PC-9 (cell line): ENCODE measurements at regions of chr9 and their contacts with region 1.

Region 1: GRCh38 chr9:68584189-68585033 is 43.7 kb upstream of the TMEM252 start:
- DNase-seq: peak; percentile 63 to 71
- H3K4me3 ChIP-seq: no peak overlapping the region
- H3K27ac ChIP-seq: no peak overlapping the region
- H3K4me1 ChIP-seq: no peaks in the 10 kb centered on the region
- H3K27me3 ChIP-seq: peaks cover 3% of the 10 kb centered on the region; the same call in 1 of the 2 replicates
- CTCF ChIP-seq: peak; percentile 98

Region 2: DNA sequence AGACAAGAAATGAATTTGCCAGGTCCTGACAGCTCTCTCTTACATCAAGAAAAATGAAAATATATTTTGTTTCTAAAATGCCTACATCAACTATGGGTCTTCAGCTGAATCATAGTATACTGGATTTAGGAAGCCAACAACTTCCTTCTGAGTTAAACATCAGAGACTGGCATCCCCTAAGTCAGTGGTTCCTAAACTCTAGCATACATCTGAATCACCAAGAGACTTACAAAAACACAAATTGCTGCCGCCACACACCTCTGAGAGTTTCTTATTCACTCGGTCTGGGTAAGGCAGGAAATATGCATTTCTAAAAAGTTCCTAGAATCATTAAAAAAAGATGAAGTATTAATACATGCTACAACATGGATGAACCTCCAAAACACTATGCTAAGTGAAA is 16.7 kb after region 1 on chr9:
- CTCF ChIA-PET with region 1: no interaction called
- POLR2A ChIA-PET with region 1: no interaction called
- intact Hi-C with region 1: no loop called
- DNase-seq: no peak
- H3K4me3 ChIP-seq: no peak overlapping the region
- H3K27ac ChIP-seq: no peak overlapping the region
- H3K4me1 ChIP-seq: no peaks in the 10 kb centered on the region
- H3K27me3 ChIP-seq: peaks cover 26% of the 10 kb centered on the region; the same call in 1 of the 2 replicates
- CTCF ChIP-seq: no peak

Region 3: GRCh38 chr9:68844631-68845612 is 260.5 kb after region 1 on chr9:
- CTCF ChIA-PET with region 1: no interaction called
- POLR2A ChIA-PET with region 1: no interaction called
- intact Hi-C with region 1: loop called (anchors 10 kb)
- DNase-seq: peak in 1 of 2 experiments; percentile 6
- H3K4me3 ChIP-seq: no peak overlapping the region
- H3K27ac ChIP-seq: no peak overlapping the region
- H3K4me1 ChIP-seq: no peaks in the 10 kb centered on the region
- H3K27me3 ChIP-seq: peaks cover 36% of the 10 kb centered on the region
- CTCF ChIP-seq: peak; percentile 54; the same call in 1 of the 2 replicates

Region 4: GRCh38 chr9:68999393-69000105 is 415.1 kb after region 1 on chr9:
- CTCF ChIA-PET with region 1: no interaction called
- POLR2A ChIA-PET with region 1: no interaction called
- intact Hi-C with region 1: loop called (anchors 1 kb)
- DNase-seq: peak in 1 of 2 experiments; percentile 41
- H3K4me3 ChIP-seq: no peak overlapping the region
- H3K27ac ChIP-seq: no peak overlapping the region
- H3K4me1 ChIP-seq: no peaks in the 10 kb centered on the region
- H3K27me3 ChIP-seq: peaks cover 94% of the 10 kb centered on the region
- CTCF ChIP-seq: peak; percentile 69

Region 5: DNA sequence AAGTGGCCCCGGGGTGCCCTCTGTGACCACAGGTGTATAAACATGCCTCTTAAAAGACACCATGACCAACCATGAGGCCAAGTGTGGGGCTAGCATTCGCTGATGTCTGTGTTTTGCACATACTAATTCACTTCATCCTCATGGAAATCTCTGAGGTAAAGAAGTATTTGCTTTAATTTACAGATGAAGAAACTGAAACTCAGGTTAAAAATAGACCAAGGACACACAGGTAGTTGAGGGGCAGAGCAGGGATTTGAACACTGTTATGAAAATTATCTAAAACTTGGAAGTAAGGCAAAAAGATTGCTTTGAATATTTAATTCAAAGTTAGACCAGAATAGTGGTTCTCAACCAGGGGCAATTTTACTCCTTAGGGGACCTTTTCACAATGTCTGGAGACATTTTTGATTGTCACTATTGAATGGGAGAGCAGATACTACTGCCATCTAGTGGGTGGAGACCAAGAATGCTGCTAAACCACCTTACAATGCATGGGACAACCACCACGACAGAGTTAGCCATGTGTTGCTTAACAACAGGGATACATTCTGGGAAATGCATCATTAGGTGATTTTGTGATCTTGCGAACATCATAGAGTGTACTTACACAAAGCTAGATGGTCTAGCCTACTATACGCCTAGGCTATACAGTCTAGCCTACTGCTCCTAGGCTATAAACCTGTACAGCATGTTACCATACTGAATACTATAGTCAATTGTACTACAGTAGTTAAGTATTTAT is 443.1 kb after region 1 on chr9:
- CTCF ChIA-PET with region 1: no interaction called
- POLR2A ChIA-PET with region 1: no interaction called
- intact Hi-C with region 1: loop called (anchors 1 kb)
- DNase-seq: peak; percentile 21 to 50
- H3K4me3 ChIP-seq: no peak overlapping the region
- H3K27ac ChIP-seq: no peak overlapping the region
- H3K4me1 ChIP-seq: no peaks in the 10 kb centered on the region
- H3K27me3 ChIP-seq: peaks cover 40% of the 10 kb centered on the region
- CTCF ChIP-seq: peak; percentile 72

Region 6: DNA sequence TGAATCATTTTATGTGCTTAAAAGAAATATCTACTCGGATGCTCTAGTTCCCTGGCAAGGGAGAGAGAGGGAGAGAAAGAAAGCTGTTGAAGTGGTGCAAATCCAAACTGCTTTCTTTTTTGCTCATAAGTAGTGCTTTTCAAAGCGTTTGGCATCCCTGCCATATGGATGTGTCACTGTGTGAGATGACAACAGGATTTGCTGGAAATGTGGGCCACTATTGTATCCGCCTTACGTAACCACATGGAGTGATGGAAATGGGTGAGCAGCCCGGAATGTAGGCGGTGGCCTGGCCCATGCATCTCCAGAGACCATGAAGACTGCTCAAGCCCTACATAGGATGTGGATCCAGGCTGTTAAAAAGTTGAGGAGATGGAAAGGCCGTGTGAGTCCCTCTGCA is 620.4 kb after region 1 on chr9:
- CTCF ChIA-PET with region 1: no interaction called
- POLR2A ChIA-PET with region 1: no interaction called
- intact Hi-C with region 1: no loop called
- DNase-seq: no peak
- H3K4me3 ChIP-seq: no peak overlapping the region
- H3K27ac ChIP-seq: no peak overlapping the region
- H3K4me1 ChIP-seq: 0 out of 2 replicates have a peak, but pooled peaks cover 4% of the 10 kb centered on the region
- H3K27me3 ChIP-seq: no peaks in the 10 kb centered on the region
- CTCF ChIP-seq: no peak